HEK293T (cell line): ENCODE measurements at regions of chr17 and their contacts with region 1.

Region 1: GRCh38 chr17:57833179-57833939 is 16.5 kb downstream of the MRPS23 start:
- DNase-seq: peak; percentile 72

Region 2: DNA sequence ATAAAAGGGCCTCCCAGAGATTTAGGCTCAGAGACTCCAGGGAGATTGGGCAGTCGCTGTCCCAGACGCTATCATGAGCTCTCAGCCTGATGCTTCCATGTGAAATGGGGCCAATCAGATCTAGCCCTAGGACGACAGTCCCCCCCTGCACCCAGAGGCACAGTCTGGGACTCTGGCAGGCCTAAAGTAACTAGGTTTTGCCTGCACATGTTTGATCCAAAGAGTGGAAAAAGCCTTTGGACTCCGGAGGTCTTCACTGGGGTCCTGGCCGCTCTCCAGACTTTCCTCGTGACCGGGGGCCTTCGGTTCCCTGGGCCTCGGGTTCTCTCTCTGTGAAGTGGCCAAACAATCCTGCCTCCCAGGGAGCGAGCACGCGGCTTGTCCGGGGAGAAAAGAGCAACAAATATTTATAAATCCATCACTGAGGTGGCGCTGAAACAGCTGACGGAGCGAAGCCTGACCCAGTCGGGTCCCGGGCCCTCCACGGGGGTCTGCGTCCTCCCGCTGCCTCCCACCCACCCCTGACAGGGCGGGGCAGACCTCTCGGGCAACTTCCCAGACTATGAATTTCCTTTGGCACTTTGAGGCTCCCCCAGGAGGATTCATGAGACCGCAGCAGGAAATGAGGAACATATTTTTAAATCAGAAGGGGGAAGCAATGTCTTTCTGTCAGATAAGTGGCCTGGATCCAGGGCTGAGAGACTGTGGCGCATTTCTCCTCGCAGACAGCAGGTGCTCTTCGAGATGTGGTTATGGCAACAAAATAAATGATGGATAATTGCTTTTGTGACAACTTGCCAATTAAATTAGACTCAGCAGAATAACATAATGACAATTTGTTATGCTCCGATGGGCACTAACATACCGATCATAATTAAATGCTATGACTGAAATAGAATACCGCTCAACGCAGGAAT is 22.4 kb before region 1 on chr17:
- CTCF ChIA-PET with region 1: interaction called, 15 read pairs
- POLR2A ChIA-PET with region 1: no interaction called
- DNase-seq: peak; percentile 37